GM10248 (cell line): ENCODE measurements at regions of chr17 and their contacts with region 1.

Region 1: GRCh38 chr17:45852535-45853297 is 8.0 kb downstream of the SPPL2C start:
- DNase-seq: peak; percentile 68
- CTCF ChIP-seq: peak; percentile 90

Region 2: DNA sequence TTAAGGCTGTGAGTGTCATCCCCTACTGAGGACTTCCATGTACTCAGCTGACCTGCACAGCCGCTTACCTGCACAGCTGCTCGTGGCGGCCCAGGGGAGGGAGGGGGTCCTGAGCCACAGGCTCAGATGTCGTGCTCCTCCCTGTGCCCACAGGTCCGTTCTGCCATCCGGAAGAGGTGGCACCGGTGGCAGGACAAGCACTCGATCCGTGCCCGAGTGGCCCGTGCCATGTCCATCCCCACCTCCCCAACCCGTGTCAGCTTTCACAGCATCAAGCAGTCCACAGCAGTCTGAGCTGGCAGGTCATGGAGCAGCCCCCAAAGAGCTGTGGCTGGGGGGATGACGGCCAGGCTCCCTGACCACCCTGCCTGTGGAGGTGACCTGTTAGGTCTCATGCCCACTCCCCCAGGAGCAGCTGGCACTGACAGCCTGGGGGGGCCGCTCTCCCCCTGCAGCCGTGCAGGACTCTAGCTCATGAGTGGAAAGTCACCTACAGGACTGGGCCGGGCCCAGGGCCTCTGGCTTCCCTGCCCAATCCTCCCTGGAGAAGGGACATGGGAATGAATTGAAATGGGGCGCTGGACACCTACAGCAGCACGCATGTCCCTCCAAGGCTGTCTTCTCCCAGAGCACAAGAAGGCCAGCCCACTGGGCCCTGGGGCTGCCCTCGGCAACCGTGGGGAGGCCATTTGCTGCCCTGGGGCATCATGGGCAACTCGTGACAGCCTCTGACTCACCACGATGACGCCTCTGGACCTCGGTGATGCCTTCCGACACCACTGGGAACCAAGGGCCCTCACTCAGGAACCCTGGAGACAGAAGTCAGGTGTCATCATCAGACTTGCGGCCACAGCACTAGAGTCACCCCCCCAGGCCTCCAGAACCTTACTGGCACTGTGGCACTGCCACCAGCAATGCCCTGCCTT is 18.0 kb before region 1 on chr17:
- CTCF ChIA-PET with region 1: interaction called, 15 read pairs
- POLR2A ChIA-PET with region 1: no interaction called
- DNase-seq: no peak
- CTCF ChIP-seq: no peak

Region 3: GRCh38 chr17:45923511-45924268 is 71.0 kb after region 1 on chr17:
- CTCF ChIA-PET with region 1: no interaction called
- POLR2A ChIA-PET with region 1: no interaction called
- DNase-seq: no peak
- CTCF ChIP-seq: no peak

Region 4: GRCh38 chr17:45954914-45955313 is 102.2 kb after region 1 on chr17:
- CTCF ChIA-PET with region 1: no interaction called
- POLR2A ChIA-PET with region 1: no interaction called
- DNase-seq: no peak
- CTCF ChIP-seq: no peak